CD4-positive, alpha-beta T cell (primary cell): ENCODE measurements at regions of chr5 and their contacts with region 1.

Region 1: GRCh38 chr5:132386644-132387286 is 17.3 kb downstream of the SLC22A5 start:
- DNase-seq: peak; percentile 66 to 90 (median 75)
- ATAC-seq: peak; percentile 92
- H3K4me3 ChIP-seq: no peak overlapping the region
- H3K4me3 Mint-ChIP-seq: no peak overlapping the region
- H3K27ac ChIP-seq: no peak overlapping the region
- H3K27ac Mint-ChIP-seq: peak overlapping the region; percentile 60
- H3K4me1 ChIP-seq: peaks cover 30% of the 10 kb centered on the region
- H3K4me1 Mint-ChIP-seq: peaks cover 31% of the 10 kb centered on the region
- H3K27me3 ChIP-seq: no peaks in the 10 kb centered on the region
- H3K27me3 Mint-ChIP-seq: no peaks in the 10 kb centered on the region
- CTCF ChIP-seq: peak; percentile 76

Region 2: GRCh38 chr5:132419502-132420468 is 33.0 kb after region 1 on chr5:
- CTCF ChIA-PET with region 1: no interaction called
- POLR2A ChIA-PET with region 1: interaction called, 3 read pairs
- intact Hi-C with region 1: loop called in 1 of 2 experiments (anchors 5 kb)
- DNase-seq: peak; percentile 27 to 84 (median 54)
- ATAC-seq: peak; percentile 76
- H3K4me3 ChIP-seq: peak overlapping the region; percentile 37
- H3K4me3 Mint-ChIP-seq: peak overlapping the region; percentile 85
- H3K27ac ChIP-seq: peak overlapping the region; percentile 81 to 88
- H3K27ac Mint-ChIP-seq: peak overlapping the region; percentile 92
- H3K4me1 ChIP-seq: peaks cover 91% of the 10 kb centered on the region
- H3K4me1 Mint-ChIP-seq: peaks cover 94% of the 10 kb centered on the region
- H3K27me3 ChIP-seq: no peaks in the 10 kb centered on the region
- H3K27me3 Mint-ChIP-seq: no peaks in the 10 kb centered on the region
- CTCF ChIP-seq: peak; percentile 85

Region 3: DNA sequence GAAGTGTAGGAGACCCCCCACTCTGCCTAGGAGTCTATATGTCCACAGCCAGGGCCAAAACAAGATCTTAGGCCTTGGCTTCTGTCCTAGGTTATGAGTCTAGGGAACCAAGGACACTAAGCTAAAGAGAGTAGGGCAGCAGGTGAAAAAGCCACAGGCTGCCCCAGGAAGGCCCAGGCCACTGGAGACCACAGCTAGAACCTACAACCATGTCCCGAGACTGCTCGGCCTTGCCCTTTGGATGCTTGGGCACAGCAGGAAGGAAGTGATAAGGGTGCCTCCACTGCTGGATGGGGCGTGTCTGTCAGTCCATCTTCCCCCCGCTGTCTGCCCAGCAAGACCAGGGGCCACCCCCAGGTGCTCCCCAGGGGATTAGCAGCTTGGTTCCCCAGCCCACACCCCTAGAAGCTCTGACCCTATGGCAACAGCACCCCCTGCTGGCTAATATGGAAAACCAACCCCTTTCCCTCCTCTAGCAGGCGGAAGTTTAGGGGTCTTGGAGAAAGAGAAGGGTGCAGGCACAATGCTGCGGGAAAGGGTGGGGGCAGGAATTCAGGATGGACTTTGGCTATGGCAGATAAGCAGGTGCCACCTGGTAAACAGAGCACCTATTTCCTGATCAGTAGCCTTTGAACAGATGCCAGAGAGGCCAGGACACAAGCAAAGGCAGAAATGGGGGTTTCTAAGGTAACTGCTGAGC is 114.3 kb after region 1 on chr5:
- CTCF ChIA-PET with region 1: interaction called, 104 read pairs
- POLR2A ChIA-PET with region 1: interaction called, 94 read pairs
- intact Hi-C with region 1: loop called (anchors 1 kb)
- DNase-seq: peak; percentile 63 to 90 (median 73)
- ATAC-seq: peak; percentile 26
- H3K4me3 ChIP-seq: no peak overlapping the region
- H3K4me3 Mint-ChIP-seq: no peak overlapping the region
- H3K27ac ChIP-seq: peak overlapping the region in 1 of 2 donors; percentile 37
- H3K27ac Mint-ChIP-seq: peak overlapping the region; percentile 65
- H3K4me1 ChIP-seq: peaks cover 49% of the 10 kb centered on the region
- H3K4me1 Mint-ChIP-seq: peaks cover 29% of the 10 kb centered on the region
- H3K27me3 ChIP-seq: no peaks in the 10 kb centered on the region
- H3K27me3 Mint-ChIP-seq: peaks cover 3% of the 10 kb centered on the region
- CTCF ChIP-seq: peak; percentile 88

Region 4: DNA sequence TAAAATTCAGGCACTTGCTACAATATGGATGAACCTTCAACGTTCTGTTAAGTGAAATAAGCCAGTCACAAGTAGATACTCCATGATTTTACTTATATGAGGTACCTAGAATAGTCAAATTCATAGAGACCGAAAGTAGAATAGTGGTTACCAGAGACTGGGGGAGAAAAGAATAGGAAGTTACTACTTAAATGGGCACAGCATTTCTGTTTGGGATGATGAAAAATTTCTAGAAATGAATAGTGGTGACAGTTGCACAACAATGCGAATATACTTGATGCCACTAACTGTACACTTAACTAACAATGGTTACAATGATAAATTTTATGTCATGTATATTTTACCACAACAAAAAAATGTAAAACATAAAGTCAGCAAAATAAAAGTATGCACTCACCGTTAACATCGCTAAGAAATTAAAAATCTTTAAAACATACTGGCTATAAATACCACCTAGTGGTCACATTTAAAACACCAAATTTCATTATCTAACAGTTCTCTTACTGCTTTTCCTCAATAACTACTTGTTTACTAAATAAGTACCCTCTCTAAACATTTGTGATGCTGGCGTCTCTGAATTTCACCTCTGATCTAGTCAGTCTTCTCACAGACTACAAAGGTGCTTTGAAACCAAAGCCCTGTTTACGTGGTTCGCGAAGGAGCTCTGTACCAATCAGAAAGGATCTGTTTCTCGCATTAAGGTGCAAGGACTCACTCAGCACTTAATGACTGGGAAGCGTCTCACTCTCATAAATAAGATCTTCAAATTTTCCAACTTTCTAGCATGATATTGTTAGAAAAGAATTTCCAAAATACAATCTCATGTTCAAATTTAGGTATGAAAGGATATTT is 327.9 kb after region 1 on chr5:
- CTCF ChIA-PET with region 1: no interaction called
- POLR2A ChIA-PET with region 1: no interaction called
- intact Hi-C with region 1: loop called (anchors 1 to 5 kb)
- DNase-seq: peak in 4 of 14 experiments; percentile 2 to 39 (median 25)
- ATAC-seq: peak; percentile 68
- H3K4me3 ChIP-seq: no peak overlapping the region
- H3K4me3 Mint-ChIP-seq: peak overlapping the region; percentile 5
- H3K27ac ChIP-seq: no peak overlapping the region
- H3K27ac Mint-ChIP-seq: no peak overlapping the region
- H3K4me1 ChIP-seq: no peaks in the 10 kb centered on the region
- H3K4me1 Mint-ChIP-seq: peaks cover 9% of the 10 kb centered on the region
- H3K27me3 ChIP-seq: no peaks in the 10 kb centered on the region
- H3K27me3 Mint-ChIP-seq: no peaks in the 10 kb centered on the region
- CTCF ChIP-seq: peak; percentile 66

Region 5: DNA sequence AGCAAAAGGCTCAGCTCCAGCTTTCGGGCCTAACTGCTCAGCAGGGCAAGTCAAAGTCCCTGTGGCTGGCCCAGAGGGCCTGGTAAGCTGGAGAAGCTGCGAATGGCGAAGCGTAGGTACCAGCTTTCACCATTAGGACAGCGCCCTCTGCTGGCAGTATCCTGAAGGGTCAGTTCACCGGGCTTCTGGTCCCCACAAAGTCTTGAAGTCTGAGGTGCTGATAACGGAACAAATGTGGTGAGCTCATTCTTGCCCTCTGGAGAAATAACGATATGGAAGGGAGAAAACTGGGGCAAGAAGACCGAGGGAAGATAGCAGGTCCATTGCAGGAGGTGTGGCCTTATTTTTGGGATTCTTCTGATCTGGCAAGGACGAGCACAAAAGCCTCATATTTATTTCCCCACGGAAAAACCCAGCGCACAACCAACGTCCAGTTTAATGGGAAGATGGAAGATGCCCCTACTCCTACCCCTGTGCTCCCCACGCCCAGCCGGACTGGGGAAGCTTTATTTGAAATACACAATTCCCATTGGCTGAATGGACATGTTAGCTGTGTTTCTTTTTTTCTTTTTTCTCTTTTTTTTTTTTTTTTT is 433.5 kb after region 1 on chr5:
- CTCF ChIA-PET with region 1: no interaction called
- POLR2A ChIA-PET with region 1: interaction called, 3 read pairs
- intact Hi-C with region 1: loop called (anchors 1 to 2 kb)
- DNase-seq: peak; percentile 79 to 94 (median 86)
- ATAC-seq: peak; percentile 79
- H3K4me3 ChIP-seq: peak overlapping the region; percentile 43
- H3K4me3 Mint-ChIP-seq: peak overlapping the region; percentile 62
- H3K27ac ChIP-seq: no peak overlapping the region
- H3K27ac Mint-ChIP-seq: no peak overlapping the region
- H3K4me1 ChIP-seq: peaks cover 22% of the 10 kb centered on the region
- H3K4me1 Mint-ChIP-seq: peaks cover 13% of the 10 kb centered on the region
- H3K27me3 ChIP-seq: peaks cover 27 to 30% of the 10 kb centered on the region in 2 experiments
- H3K27me3 Mint-ChIP-seq: peaks cover 50% of the 10 kb centered on the region
- CTCF ChIP-seq: peak; percentile 90

Region 6: DNA sequence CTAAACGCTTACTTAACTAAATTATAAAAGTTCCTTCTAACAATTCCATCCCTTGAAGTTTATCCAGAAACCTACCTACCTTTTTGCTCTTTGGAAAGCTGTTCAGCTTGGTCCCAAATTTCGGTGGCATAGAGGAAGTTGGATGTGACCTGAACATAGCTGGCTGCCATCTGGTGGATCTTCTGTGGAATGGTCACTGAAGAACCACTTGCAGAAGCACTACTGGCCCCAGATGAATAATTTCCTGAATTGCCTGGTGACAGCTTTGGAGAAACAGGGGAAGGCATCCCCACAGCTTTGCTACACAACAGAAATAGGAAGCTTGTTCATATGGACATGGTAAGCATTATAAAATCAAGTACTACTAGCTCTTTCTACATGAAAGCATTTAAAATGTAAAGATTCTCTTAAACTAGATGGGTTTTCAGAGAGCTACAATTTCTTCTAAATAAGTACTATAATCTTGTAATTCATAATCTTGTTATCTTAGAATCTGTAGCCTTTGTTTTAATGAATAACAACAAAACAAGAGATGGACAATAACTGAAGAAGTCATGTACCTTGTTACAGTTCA is 496.6 kb after region 1 on chr5:
- CTCF ChIA-PET with region 1: no interaction called
- POLR2A ChIA-PET with region 1: no interaction called
- intact Hi-C with region 1: loop called in 1 of 2 experiments (anchors 5 kb)
- DNase-seq: peak in 5 of 14 experiments; percentile 7 to 73 (median 54)
- ATAC-seq: peak; percentile 83
- H3K4me3 ChIP-seq: no peak overlapping the region
- H3K4me3 Mint-ChIP-seq: no peak overlapping the region
- H3K27ac ChIP-seq: no peak overlapping the region
- H3K27ac Mint-ChIP-seq: peak overlapping the region; percentile 0
- H3K4me1 ChIP-seq: no peaks in the 10 kb centered on the region
- H3K4me1 Mint-ChIP-seq: no peaks in the 10 kb centered on the region
- H3K27me3 ChIP-seq: no peaks in the 10 kb centered on the region
- H3K27me3 Mint-ChIP-seq: no peaks in the 10 kb centered on the region
- CTCF ChIP-seq: peak; percentile 48

Region 7: GRCh38 chr5:133610489-133611356 is 1224.0 kb after region 1 on chr5:
- CTCF ChIA-PET with region 1: no interaction called
- POLR2A ChIA-PET with region 1: no interaction called
- intact Hi-C with region 1: no loop called
- DNase-seq: peak in 7 of 14 experiments; percentile 11 to 49 (median 21)
- ATAC-seq: peak; percentile 43
- H3K4me3 ChIP-seq: peak overlapping the region; percentile 41
- H3K4me3 Mint-ChIP-seq: peak overlapping the region; percentile 62
- H3K27ac ChIP-seq: no peak overlapping the region
- H3K27ac Mint-ChIP-seq: no peak overlapping the region
- H3K4me1 ChIP-seq: peaks cover 16% of the 10 kb centered on the region
- H3K4me1 Mint-ChIP-seq: peaks cover 11% of the 10 kb centered on the region
- H3K27me3 ChIP-seq: peaks cover 50 to 51% of the 10 kb centered on the region in 2 experiments
- H3K27me3 Mint-ChIP-seq: peaks cover 70% of the 10 kb centered on the region
- CTCF ChIP-seq: peak; percentile 18